Kidney (tissue), 22 donors: ENCODE measurements at regions of chr11 and their contacts with region 1.

Region 1: GRCh38 chr11:110195845-110196754 is 100.3 kb downstream of the RDX start:
- DNase-seq: peak in 2 of 5 donors; percentile 61 to 68
- H3K4me3 ChIP-seq: no peak overlapping the region
- H3K27ac ChIP-seq: peak overlapping the region; percentile 47 to 59
- H3K4me1 ChIP-seq: peaks cover 4 to 10% (median 9%) of the 10 kb centered on the region in 3 donors
- H3K27me3 ChIP-seq: no peaks in the 10 kb centered on the region
- CTCF ChIP-seq: no peak

Region 2: DNA sequence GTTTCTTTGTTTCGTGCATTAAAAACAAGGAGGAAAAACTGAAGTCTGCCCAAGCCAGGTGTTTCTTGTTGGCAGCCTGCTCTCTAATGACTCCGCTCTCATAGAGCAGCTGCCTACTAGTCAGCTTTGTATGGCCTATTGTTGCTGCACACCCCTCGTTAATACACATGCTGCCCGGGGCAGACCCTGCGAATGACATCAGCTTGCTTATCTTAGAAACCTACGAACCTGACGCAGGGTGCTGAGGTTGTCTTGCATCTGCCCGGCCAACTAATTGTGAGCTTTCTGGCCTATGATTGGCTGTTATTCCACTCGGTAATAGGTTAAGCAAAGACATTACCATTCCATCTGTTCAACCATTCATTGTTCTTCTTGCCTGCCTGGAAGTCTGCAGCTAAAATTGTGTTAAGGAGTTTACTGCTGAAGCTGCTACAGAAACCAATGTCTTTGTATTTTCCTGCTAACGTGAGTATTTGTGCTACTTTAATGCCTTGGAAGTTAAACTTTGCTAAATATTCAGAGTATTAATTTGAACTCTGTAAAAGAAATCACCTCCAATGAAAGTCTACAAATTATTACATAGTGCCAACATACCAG is 65.4 kb before region 1 on chr11:
- intact Hi-C with region 1: no loop called
- DNase-seq: peak in 4 of 5 donors; percentile 35 to 73 (median 58)
- H3K4me3 ChIP-seq: no peak overlapping the region
- H3K27ac ChIP-seq: no peak overlapping the region
- H3K4me1 ChIP-seq: peaks cover 0 to 9% (median 2%) of the 10 kb centered on the region in 3 donors
- H3K27me3 ChIP-seq: no peaks in the 10 kb centered on the region
- CTCF ChIP-seq: no peak

Region 3: GRCh38 chr11:110376711-110377324 is 180.7 kb after region 1 on chr11:
- intact Hi-C with region 1: loop called (anchors 10 kb)
- DNase-seq: peak; percentile 68 to 93 (median 83)
- H3K4me3 ChIP-seq: peak overlapping the region; percentile 35 to 46 (median 45)
- H3K27ac ChIP-seq: peak overlapping the region in 1 of 2 donors; percentile 63
- H3K4me1 ChIP-seq: peaks cover 0 to 8% (median 7%) of the 10 kb centered on the region in 3 donors
- H3K27me3 ChIP-seq: no peaks in the 10 kb centered on the region
- CTCF ChIP-seq: peak; percentile 71

Region 4: DNA sequence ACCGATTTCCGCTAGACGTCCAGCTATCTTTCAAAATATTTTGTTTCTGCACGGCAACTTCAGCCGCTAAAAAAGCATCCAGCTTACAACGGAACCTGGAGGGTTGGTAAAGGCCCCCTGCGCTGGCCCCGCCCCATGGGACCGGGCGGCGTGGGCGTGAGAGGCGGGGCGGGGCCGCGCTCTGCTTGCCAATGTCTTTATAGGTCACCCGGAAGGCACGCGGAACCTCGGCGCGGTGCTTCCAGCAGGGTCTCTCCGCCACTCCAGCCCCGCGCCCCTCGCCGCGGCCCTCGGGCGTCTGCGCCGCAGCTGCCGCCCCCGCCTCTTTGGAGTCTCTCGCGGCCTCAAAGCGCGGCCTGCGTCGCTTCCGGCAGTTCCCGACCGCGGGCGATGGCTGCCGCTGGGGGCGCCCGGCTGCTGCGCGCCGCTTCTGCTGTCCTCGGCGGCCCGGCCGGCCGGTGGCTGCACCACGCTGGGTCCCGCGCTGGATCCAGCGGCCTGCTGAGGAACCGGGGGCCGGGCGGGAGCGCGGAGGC is 233.7 kb after region 1 on chr11 and contains the start of gene FDX1:
- intact Hi-C with region 1: loop called (anchors 10 kb)
- DNase-seq: peak; percentile 91 to 95 (median 93)
- H3K4me3 ChIP-seq: peak within 1 kb of the TSS; percentile 76 to 91 (median 85)
- H3K27ac ChIP-seq: peak within 1 kb of the TSS; percentile 61 to 88
- H3K4me1 ChIP-seq: peaks cover 4 to 19% (median 10%) of the 10 kb centered on the region in 3 donors
- H3K27me3 ChIP-seq: no peaks in the 10 kb centered on the region
- CTCF ChIP-seq: peak; percentile 53
- total RNA-seq, gene FDX1: 13.1 TPM